Activated CD4-positive, alpha-beta T cell treated with anti-CD3 and anti-CD28 coated beads, Interleukin-2, amount 10 ng/mL, durations not matched to agents 24 days and 14 days (primary cell): ENCODE measurements at regions of chr18 and their contacts with region 1.

Region 1: GRCh38 chr18:25169701-25170100 is 182.3 kb downstream of the ZNF521 start:
- DNase-seq: no peak
- H3K4me3 Mint-ChIP-seq: no peak overlapping the region
- H3K27ac Mint-ChIP-seq: no peak overlapping the region
- H3K4me1 Mint-ChIP-seq: peaks cover 8% of the 10 kb centered on the region
- H3K27me3 Mint-ChIP-seq: peaks cover 2% of the 10 kb centered on the region

Region 2: DNA sequence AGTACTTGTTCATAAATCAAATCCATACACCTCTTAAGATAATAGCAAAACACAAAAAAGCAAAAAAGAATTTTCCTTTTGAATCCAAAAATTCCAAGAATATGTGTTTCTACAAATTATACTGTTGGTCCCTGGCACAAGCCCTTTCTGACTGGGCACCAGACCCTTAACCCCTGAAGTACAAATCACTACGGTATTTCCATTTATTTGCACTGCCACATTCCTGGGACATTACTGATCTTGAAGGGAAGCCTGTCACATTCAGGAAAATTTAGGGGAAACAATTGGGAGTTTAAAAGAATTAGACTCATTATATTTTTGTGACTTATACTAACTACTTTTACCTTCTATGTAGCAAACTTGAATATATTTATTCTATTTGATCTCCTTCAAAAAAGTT is 83.4 kb after region 1 on chr18:
- intact Hi-C with region 1: loop called (anchors 10 kb)
- DNase-seq: no peak
- H3K4me3 Mint-ChIP-seq: no peak overlapping the region
- H3K27ac Mint-ChIP-seq: no peak overlapping the region
- H3K4me1 Mint-ChIP-seq: no peaks in the 10 kb centered on the region
- H3K27me3 Mint-ChIP-seq: no peaks in the 10 kb centered on the region

Region 3: DNA sequence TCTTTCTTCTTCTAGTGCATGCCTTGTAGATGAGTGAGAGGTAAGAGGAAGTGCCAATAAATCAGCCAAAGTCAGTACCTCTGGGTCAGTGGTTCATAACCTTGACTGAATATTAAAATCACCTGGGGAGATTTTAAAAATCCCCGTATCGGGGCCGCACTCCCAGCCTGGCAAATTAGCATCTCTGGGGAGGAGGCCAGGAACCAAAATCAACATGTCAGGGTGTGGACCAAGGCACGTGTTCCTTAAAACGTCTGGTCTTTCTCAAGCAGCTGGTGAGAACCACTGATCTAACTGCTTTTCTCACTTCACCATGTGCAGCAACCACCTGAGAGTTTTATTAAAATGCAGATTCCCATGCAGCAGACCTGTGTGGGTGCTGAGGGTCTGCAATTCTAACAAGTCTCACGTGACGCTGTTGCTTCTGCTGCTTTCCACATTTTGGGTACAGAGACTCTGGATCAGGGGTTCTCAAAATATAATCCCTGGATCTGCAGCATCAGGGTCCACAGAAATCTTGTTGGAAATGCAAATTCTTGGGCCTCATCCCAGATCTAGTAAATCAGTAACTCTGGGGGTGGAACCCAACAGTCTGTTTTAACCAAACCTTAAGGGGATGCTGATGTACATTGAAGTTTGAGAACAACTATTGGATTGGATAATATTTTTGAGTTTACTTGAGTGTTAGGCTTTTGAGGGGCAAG is 1966.0 kb after region 1 on chr18:
- intact Hi-C with region 1: no loop called
- DNase-seq: no peak
- H3K4me3 Mint-ChIP-seq: no peak overlapping the region
- H3K27ac Mint-ChIP-seq: no peak overlapping the region
- H3K4me1 Mint-ChIP-seq: no peaks in the 10 kb centered on the region
- H3K27me3 Mint-ChIP-seq: no peaks in the 10 kb centered on the region